CD4-positive, alpha-beta T cell (primary cell): ENCODE measurements at regions of chr2 and their contacts with region 1.

Region 1: GRCh38 chr2:30208452-30208851 is 22.9 kb upstream of the LBH start:
- DNase-seq: peak in 10 of 14 experiments; percentile 16 to 74 (median 33)
- ATAC-seq: peak; percentile 58
- H3K4me3 ChIP-seq: no peak overlapping the region
- H3K4me3 Mint-ChIP-seq: peak overlapping the region; percentile 42
- H3K27ac ChIP-seq: peak overlapping the region in 1 of 2 donors; percentile 9
- H3K27ac Mint-ChIP-seq: peak overlapping the region; percentile 82
- H3K4me1 ChIP-seq: peaks cover 21% of the 10 kb centered on the region
- H3K4me1 Mint-ChIP-seq: peaks cover 31% of the 10 kb centered on the region
- H3K27me3 ChIP-seq: no peaks in the 10 kb centered on the region
- H3K27me3 Mint-ChIP-seq: no peaks in the 10 kb centered on the region
- CTCF ChIP-seq: peak; percentile 96

Region 2: DNA sequence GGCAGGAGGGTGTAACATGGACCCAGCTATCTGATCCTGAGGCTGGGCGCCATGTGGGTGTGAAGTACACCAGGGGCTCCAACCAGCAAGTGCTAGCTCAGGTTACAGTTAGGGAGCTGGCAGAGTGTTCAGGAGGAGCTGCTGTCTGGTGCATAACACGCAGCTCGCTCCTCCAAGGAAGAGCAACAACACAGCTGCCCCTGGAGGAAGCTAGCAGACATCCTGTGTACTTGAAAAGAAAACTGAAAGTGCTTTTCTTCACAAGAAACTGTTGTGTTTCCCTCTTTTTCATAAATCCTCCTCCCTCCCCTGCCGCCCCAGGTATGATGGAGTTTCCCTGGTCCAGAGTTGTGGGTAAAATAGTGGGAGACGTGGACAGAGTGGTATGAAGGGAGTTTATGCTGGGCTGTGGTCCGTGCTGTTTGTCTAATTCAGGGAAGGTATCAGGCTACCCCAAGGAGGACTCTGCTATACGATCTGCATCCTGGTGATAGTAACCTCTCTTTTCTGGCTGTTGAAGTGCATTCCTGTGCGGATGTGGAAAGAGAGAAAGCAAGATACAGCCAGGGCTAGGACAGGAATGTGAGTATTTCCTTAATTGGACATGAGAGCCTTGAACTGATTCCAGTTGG is 16.8 kb after region 1 on chr2:
- CTCF ChIA-PET with region 1: interaction called, 46 read pairs
- POLR2A ChIA-PET with region 1: interaction called, 137 read pairs
- intact Hi-C with region 1: loop called (anchors 2 kb)
- DNase-seq: peak; percentile 28 to 85 (median 50)
- ATAC-seq: peak; percentile 84
- H3K4me3 ChIP-seq: peak overlapping the region; percentile 65
- H3K4me3 Mint-ChIP-seq: peak overlapping the region; percentile 97
- H3K27ac ChIP-seq: peak overlapping the region; percentile 92 to 94
- H3K27ac Mint-ChIP-seq: peak overlapping the region; percentile 99
- H3K4me1 ChIP-seq: peaks cover 71% of the 10 kb centered on the region
- H3K4me1 Mint-ChIP-seq: peaks cover 81% of the 10 kb centered on the region
- H3K27me3 ChIP-seq: no peaks in the 10 kb centered on the region
- H3K27me3 Mint-ChIP-seq: no peaks in the 10 kb centered on the region
- CTCF ChIP-seq: no peak

Region 3: DNA sequence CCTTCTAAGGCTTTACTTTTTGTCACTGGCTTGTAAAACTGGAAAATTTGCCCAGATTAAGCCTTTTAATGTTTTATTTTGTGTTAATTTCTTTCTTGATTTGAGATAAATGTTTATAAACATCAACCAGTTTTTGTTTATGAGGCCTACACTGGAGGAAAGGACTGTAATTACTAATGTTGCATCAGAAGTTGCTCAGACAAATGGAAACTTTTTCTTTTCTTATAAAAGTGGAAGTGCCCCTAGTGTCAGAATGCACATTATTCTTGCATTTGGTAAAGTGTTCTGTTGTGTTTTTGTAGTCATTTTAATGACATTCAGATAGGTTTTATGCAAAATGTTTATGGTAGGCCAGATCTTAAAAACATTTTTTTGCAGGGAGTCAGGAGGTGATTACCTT is 263.9 kb after region 1 on chr2:
- CTCF ChIA-PET with region 1: interaction called, 13 read pairs
- POLR2A ChIA-PET with region 1: interaction called, 3 read pairs
- intact Hi-C with region 1: loop called (anchors 1 to 2 kb)
- DNase-seq: peak in 1 of 14 experiments; percentile 9
- ATAC-seq: no peak
- H3K4me3 ChIP-seq: no peak overlapping the region
- H3K4me3 Mint-ChIP-seq: no peak overlapping the region
- H3K27ac ChIP-seq: no peak overlapping the region
- H3K27ac Mint-ChIP-seq: no peak overlapping the region
- H3K4me1 ChIP-seq: no peaks in the 10 kb centered on the region
- H3K4me1 Mint-ChIP-seq: peaks cover 49% of the 10 kb centered on the region
- H3K27me3 ChIP-seq: no peaks in the 10 kb centered on the region
- H3K27me3 Mint-ChIP-seq: no peaks in the 10 kb centered on the region
- CTCF ChIP-seq: no peak